ENCODE measurements at regions of chr1 and their contacts with region 1.

Region 1: DNA sequence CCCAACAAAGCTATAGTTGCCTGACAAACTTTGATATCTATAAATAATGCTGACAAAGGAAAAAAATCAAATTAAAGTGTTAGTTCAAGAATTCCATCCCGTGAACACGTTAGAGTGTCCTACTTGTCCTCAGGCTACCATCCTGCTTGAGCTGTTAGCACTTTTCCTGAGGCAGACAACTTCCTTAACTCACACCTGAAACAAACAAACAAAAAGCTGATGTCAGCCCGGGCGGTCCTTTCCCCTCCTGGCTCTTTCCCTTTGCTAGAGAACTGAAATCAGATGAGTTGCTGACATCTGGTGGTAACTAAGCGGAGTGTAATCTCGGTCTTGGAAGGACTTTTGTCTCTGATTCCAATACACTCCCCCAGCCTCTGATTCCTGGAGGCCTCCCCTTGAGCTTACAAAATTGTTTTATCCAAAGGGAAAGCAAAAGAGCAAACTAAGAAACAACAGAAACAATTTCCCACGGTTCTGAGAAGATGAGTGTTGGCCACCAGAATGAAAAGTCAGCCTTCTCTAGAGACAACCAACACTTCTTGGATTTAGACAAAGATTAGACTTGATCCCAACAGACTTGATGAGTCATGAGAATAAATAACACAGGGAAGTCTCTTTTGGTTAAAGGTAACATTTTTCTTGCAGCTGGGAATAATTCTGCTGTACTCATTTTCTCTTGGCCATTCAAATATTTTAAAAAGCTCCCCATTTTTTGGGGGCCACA is 135.4 kb downstream of the PROX1 start:
- DNase-seq: no peak
- H3K4me3 ChIP-seq: no peak overlapping the region
- H3K27ac ChIP-seq: peak overlapping the region in 1 of 8 donors; percentile 6
- H3K4me1 ChIP-seq: peaks cover 0 to 11% (median 0%) of the 10 kb centered on the region in 6 donors
- H3K27me3 ChIP-seq: peaks cover 0 to 5% (median 0%) of the 10 kb centered on the region in 7 donors
- CTCF ChIP-seq: peak in 9 of 11 experiments; percentile 22 to 69 (median 48)
- POLR2A ChIP-seq: no peak

Region 2: DNA sequence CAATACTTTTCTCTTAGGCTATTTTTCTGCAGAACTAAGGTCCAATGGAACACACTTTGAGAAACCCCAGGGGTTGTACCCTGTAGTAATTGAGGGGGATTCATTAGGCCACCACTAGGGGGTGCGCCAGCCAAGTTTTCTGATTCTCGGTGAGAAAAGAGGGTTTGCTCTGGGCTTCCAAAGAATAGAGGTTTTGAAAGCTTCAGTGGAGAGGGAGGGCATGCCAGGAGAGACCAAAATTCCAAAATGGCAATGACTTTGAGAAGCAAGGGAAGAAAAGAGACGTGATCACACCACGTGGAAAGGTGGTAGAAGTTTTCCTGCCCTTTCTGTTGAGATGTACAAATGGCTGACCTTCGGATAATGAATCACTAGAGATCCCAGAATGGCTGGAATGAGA is 748.9 kb before region 1 on chr1:
- intact Hi-C with region 1: loop called (anchors 5 kb)
- DNase-seq: no peak
- H3K4me3 ChIP-seq: no peak overlapping the region
- H3K27ac ChIP-seq: no peak overlapping the region
- H3K4me1 ChIP-seq: no peaks in the 10 kb centered on the region
- H3K27me3 ChIP-seq: no peaks in the 10 kb centered on the region
- CTCF ChIP-seq: peak; percentile 15 to 81 (median 68)
- POLR2A ChIP-seq: no peak